Activated T-helper 1 cell treated with anti-CD3 and anti-CD28 coated beads, Interleukin-12 subunit alpha, Interleukin-12 subunit beta, Interleukin-2, Interleukin-4 antibody, amounts not matched to agents 30 ng/mL and 10 ng/mL and 1 ng/mL, durations not matched to agents 14 hours and 24 hours and 36 hours (primary cell): ENCODE measurements at regions of chr2 and their contacts with region 1.

Region 1: DNA sequence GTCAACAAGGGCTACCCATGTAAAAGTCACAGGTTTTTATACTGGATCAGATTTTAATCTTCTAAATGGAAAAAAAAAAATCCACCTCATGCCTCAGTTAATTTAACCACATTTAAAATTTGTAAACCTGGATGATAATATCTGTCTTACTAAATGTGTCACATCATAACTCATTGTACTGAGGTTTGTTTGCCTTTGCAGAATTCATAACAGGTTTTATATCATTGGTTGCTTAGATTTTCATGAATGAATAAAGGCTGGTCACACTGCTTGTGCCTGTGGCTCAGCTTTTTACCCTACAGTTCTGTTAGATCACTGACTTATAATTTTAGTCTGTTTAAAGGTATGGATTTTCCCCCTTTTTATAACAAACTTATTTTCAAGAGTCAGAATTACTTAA is 48.9 kb downstream of the PSMD14 start:
- DNase-seq: no peak
- H3K4me3 Mint-ChIP-seq: no peak overlapping the region
- H3K27ac Mint-ChIP-seq: no peak overlapping the region
- H3K4me1 Mint-ChIP-seq: peaks cover 14% of the 10 kb centered on the region
- H3K27me3 Mint-ChIP-seq: no peaks in the 10 kb centered on the region

Region 2: DNA sequence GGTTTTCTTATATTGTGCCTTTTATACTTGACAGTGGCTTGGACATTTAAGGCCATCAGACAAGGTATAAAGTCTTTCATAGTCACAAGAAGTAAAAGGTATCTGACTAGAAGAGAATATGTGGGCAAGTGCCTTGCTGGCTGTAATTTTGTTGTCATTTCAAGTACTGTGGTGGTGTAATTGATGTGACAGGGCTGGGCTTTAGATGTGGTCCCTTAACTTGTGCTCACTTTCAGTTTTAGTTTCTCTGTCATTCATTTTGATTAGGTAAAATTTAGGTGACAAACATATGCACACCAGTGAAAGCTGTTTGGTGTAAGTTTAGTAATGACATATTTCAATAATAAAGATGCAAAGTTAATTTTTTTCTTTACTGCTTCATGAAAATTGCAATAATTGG is 27.8 kb after region 1 on chr2:
- intact Hi-C with region 1: loop called (anchors 2 kb)
- DNase-seq: peak; percentile 36
- H3K4me3 Mint-ChIP-seq: no peak overlapping the region
- H3K27ac Mint-ChIP-seq: no peak overlapping the region
- H3K4me1 Mint-ChIP-seq: peaks cover 27% of the 10 kb centered on the region
- H3K27me3 Mint-ChIP-seq: no peaks in the 10 kb centered on the region

Region 3: DNA sequence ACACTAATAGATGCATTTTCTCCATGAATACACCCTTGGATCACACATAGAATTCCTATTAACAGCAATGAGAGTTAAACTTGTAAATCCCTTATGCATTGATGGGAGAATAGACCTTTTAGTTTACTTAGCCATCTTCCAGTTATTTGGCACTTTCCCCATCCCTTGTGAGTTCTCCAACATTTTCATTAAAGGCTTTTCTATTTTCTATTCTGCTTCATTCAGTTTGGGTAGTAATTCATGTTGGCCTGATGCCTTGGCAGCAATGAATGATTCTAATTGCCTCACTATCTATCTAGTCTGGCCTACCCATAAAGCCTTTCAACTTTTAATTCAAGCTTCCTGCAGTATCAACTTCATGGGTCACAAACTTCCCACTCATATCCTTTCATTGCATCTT is 91.3 kb after region 1 on chr2:
- intact Hi-C with region 1: no loop called
- DNase-seq: no peak
- H3K4me3 Mint-ChIP-seq: no peak overlapping the region
- H3K27ac Mint-ChIP-seq: no peak overlapping the region
- H3K4me1 Mint-ChIP-seq: no peaks in the 10 kb centered on the region
- H3K27me3 Mint-ChIP-seq: peaks cover 4% of the 10 kb centered on the region

Region 4: DNA sequence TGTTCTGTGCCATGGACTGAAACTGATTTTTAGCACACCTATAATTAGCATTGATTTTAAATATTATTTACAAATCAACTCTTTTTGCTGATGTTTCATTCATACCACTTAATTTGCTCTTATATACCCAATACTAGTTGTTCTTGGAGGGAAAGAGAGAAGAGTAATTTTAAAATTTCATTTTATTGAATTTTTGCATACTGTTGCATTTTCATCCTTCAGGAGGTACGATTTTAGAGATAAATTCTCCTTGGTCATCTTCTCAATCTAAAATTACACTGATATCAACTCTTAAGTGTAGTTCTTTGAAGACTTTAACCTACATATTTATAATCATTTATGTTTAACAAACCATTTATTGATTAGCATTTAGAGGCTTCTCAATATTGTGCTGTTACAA is 338.1 kb after region 1 on chr2:
- intact Hi-C with region 1: no loop called
- DNase-seq: no peak
- H3K4me3 Mint-ChIP-seq: no peak overlapping the region
- H3K27ac Mint-ChIP-seq: no peak overlapping the region
- H3K4me1 Mint-ChIP-seq: no peaks in the 10 kb centered on the region
- H3K27me3 Mint-ChIP-seq: peaks cover 18% of the 10 kb centered on the region